ENCODE measurements at regions of chr10 and their contacts with region 1.

Region 1: GRCh38 chr10:33265621-33266020 is 68.8 kb downstream of the NRP1 start:
- DNase-seq: peak; percentile 84
- H3K4me3 Mint-ChIP-seq: no peak overlapping the region
- H3K27ac Mint-ChIP-seq: no peak overlapping the region
- H3K4me1 Mint-ChIP-seq: peaks cover 24% of the 10 kb centered on the region
- H3K27me3 Mint-ChIP-seq: peaks cover 17% of the 10 kb centered on the region

Region 2: DNA sequence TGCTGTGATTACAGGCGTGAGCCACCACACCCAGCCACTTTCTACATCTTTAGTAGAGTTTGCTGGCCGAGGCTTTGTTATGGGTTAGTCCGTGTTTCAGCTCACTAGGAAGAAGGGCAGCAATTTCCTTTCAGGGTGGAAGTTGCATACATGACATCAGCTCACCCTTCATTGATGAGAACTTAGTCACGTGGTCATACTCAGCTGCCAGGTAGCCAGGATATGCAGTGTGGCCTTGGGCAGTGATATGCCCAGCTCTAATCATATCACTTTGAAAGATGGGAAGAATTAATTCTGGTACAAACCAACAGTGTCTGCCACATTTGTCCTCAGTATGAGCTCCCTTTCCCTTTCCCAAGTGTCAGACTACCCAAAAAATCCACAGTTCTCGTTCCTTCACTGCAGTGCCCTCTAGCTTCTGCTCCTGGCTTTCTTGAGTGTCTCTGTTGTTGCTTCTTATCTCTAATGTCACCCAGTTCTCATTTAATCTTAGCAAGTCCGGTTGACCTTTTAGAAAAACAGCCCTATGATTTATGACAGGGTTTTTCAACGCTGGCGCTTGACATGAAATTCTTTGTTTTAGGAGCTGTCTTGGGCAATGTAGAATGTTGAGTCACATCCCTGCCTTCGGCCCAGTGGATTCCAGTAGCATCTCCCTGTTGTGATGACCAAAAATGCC is 198.9 kb before region 1 on chr10:
- CTCF ChIA-PET with region 1: no interaction called
- intact Hi-C with region 1: no loop called
- DNase-seq: no peak
- H3K4me3 Mint-ChIP-seq: no peak overlapping the region
- H3K27ac Mint-ChIP-seq: no peak overlapping the region
- H3K4me1 Mint-ChIP-seq: peaks cover 2% of the 10 kb centered on the region
- H3K27me3 Mint-ChIP-seq: no peaks in the 10 kb centered on the region

Region 3: DNA sequence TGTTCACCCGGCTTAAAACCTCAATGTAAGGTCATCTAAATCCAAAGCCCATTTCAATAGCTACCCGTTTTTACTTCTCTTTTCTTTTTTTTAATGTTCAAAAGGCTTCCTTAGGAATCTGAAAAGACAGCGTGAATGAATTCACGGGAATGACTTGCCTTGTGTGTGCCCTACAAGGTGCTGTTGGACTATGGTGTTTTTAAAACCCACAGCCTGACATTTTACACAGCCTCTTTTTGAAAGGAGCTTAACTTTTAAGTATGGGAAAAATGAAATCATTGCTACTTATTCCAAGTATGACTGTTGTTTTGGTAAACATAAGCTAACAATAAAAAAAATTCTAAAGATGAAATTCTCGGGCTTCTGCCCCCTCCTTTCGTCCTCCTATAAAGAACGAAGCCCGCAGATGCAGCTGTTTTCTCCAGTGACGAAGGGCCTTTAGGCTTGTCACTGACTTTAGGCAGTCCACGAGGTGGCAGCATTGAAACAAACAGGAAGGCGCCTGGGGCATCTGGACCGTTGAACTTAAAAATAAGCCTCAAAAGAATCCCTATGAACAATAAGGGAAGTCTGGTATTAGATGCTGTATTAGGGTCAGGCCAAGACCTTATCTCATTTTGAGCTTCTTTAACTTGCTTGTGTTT is 72.4 kb before region 1 on chr10:
- CTCF ChIA-PET with region 1: no interaction called
- intact Hi-C with region 1: loop called (anchors 1 kb)
- DNase-seq: peak; percentile 89
- H3K4me3 Mint-ChIP-seq: no peak overlapping the region
- H3K27ac Mint-ChIP-seq: no peak overlapping the region
- H3K4me1 Mint-ChIP-seq: no peaks in the 10 kb centered on the region
- H3K27me3 Mint-ChIP-seq: peaks cover 4% of the 10 kb centered on the region

Region 4: GRCh38 chr10:33376976-33377657 is 111.5 kb after region 1 on chr10:
- CTCF ChIA-PET with region 1: no interaction called
- intact Hi-C with region 1: loop called (anchors 1 kb)
- DNase-seq: no peak
- H3K4me3 Mint-ChIP-seq: no peak overlapping the region
- H3K27ac Mint-ChIP-seq: no peak overlapping the region
- H3K4me1 Mint-ChIP-seq: peaks cover 22% of the 10 kb centered on the region
- H3K27me3 Mint-ChIP-seq: peaks cover 4% of the 10 kb centered on the region

Region 5: DNA sequence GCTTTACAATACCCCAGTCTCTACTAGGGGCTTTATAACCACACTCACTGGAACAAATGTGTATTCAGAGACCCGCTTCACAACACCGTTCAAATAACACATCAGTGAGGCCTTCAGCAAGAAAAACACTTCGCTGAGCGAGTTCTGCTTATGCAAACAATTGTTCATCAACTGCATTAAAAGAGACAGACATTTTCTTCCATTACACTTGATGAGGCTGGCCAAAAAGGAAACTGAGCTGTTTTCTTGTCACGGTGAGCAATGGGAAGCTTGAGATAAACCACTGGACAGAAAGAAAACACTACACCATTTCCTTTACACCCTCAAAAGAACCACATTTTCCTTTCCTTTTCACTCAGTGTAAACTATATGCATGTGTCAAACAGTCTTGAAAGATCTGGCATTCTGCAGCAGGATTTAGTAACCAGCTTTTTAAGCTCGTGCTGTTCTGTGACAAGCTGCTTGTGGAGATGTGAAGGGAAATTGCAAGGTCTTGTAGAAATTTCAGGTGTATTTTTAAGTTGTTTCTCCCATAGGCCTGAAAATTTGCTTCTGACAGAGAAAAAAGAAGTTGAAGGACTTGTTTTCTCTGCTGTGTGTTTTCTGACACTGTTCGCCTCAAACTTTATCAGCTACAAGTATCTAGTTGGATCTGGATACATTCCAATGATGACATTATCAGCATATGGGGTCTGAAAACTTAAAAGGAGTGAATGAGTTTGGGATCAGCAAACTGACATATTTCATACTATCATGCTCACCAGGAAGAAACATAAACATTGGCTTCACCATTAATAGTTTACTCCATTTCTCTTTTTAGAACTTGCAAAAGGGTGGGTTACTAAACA is 856.4 kb after region 1 on chr10:
- CTCF ChIA-PET with region 1: no interaction called
- intact Hi-C with region 1: loop called (anchors 2 kb)
- DNase-seq: peak; percentile 41
- H3K4me3 Mint-ChIP-seq: no peak overlapping the region
- H3K27ac Mint-ChIP-seq: peak overlapping the region; percentile 4
- H3K4me1 Mint-ChIP-seq: peaks cover 28% of the 10 kb centered on the region
- H3K27me3 Mint-ChIP-seq: no peaks in the 10 kb centered on the region

Region 6: GRCh38 chr10:34134602-34135001 is 869.0 kb after region 1 on chr10:
- CTCF ChIA-PET with region 1: no interaction called
- intact Hi-C with region 1: no loop called
- DNase-seq: no peak
- H3K4me3 Mint-ChIP-seq: no peak overlapping the region
- H3K27ac Mint-ChIP-seq: no peak overlapping the region
- H3K4me1 Mint-ChIP-seq: no peaks in the 10 kb centered on the region
- H3K27me3 Mint-ChIP-seq: peaks cover 19% of the 10 kb centered on the region